ENCODE measurements at regions of chr1 and their contacts with region 1.

Region 1: GRCh38 chr1:204438628-204439027 is 27.0 kb upstream of the PPP1R15B start:
- DNase-seq: peak; percentile 62
- H3K4me3 ChIP-seq: no peak overlapping the region
- H3K27ac ChIP-seq: peak overlapping the region; percentile 37
- H3K4me1 ChIP-seq: peaks cover 42% of the 10 kb centered on the region
- H3K27me3 ChIP-seq: no peaks in the 10 kb centered on the region
- CTCF ChIP-seq: no peak
- POLR2A ChIP-seq: no peak

Region 2: DNA sequence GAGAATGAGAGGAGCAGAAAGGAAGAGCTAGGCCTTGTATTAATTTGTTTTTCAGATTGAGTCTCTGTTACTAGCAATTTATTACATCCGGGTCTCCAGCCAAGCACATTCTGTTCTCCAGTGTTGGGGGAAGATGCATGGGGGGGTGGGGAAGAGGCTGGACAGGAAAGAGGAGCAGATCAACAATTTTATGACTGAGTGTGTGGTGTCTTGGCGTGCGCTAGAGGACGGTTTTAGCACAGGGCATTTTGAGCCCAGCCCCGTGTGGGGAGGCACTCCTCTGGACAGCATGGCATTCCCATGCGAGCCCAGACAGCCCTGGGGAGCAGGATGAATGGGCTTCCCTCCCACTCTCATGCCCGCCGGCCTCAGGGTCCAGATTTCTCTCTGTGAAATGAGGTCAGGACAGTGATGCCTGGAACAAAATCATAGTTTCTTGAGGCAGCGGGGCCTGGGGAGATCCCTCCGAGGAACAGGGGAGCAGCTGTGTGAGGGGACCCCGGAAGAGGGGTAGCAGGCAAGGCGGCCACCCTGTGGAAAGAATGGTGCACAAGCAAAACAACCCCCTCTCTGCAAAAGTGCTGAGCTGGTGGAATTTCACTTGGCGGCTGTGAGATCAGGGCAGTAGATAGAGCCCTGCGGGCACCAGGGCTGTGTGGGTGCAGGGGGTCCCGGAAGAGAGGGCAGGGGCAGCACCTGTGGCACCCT is 349.4 kb before region 1 on chr1:
- CTCF ChIA-PET with region 1: no interaction called
- POLR2A ChIA-PET with region 1: no interaction called
- dilution Hi-C with region 1: no loop called
- intact Hi-C with region 1: no loop called
- DNase-seq: peak; percentile 50
- H3K4me3 ChIP-seq: no peak overlapping the region
- H3K27ac ChIP-seq: peak overlapping the region; percentile 6
- H3K4me1 ChIP-seq: peaks cover 25% of the 10 kb centered on the region
- H3K27me3 ChIP-seq: no peaks in the 10 kb centered on the region
- CTCF ChIP-seq: no peak
- POLR2A ChIP-seq: no peak

Region 3: DNA sequence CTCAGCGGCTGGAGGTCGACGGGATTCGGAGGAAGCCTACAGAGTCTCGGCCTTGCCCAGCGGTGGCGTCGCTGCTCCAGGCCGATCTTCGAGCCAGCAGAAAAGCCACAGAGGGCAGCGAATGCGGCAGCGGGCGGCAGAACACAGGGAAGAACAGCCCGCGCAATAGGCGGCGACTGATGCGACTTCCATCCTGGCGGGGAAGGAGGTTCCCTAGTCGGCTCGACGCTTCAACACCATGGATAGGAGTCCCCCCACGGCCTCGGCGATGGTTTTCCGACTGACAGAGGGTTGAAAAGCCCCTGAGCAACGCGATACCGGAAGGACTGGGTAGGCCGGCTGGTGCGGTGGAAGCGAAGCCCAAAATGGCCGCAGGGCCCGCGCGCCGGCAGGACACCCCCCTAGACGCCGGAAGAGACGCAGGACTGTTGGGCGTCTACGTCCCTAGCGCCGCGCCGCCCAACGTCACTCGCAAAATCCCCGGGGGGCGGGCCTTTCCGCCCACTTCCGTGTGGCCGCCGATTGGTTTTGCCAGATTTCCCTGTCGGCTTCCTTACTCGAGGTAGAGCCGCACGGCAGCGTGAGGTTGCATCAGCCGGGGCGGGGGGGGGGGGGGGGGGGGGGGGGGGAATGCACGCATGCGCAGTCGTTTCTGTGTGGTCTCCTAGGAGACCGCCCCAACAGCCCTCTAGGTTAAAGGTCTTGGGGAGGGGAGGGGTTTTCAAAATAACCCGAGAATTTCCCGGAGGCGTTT is 27.0 kb before region 1 on chr1 and contains the start of gene PPP1R15B:
- CTCF ChIA-PET with region 1: interaction called, 10 read pairs
- POLR2A ChIA-PET with region 1: no interaction called
- dilution Hi-C with region 1: no loop called
- intact Hi-C with region 1: loop called (anchors 1 kb)
- DNase-seq: peak; percentile 99
- H3K4me3 ChIP-seq: peak within 1 kb of the TSS; percentile 49 to 94 (median 78)
- H3K27ac ChIP-seq: peak within 1 kb of the TSS; percentile 89
- H3K4me1 ChIP-seq: peaks cover 6% of the 10 kb centered on the region
- H3K27me3 ChIP-seq: no peaks in the 10 kb centered on the region
- CTCF ChIP-seq: no peak
- POLR2A ChIP-seq: peak; percentile 96
- total RNA-seq, gene PPP1R15B: 39.8 and 41.7 TPM in 2 replicates

Region 4: DNA sequence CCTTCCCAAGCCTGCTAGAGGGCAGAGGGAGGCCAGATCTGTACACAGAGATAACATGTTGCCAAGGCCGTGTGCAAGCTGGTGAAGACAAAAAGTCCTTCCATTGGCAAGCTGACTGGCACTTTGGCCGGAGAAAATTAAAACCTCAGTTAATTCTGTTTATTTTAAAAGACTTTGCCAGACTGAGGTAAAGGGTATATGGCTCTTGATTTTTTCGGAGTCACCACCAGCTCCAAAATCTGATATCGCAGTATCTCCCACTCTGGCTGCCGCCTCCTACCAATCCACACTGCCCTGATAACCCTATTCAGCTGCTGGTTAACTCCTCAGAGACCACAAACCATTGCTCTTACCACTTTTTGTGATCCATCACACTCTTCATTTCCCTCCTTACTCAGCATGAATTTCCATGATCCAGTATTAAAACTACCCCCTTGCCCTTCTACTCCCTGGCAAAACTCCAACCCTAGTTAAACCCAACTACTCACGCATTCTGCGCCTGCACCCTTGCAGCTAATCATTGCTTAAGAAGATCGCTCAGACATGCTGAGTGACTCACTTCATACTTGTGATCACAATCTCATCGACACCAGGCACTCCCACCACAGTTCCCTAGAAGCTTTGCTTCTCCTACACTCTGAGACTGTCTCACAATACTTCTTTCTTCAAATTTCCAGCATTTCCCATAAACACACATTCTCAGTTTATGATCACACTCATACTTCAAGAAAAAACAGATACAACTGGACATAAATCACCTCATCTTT is 21.2 kb before region 1 on chr1:
- CTCF ChIA-PET with region 1: interaction called, 8 read pairs
- POLR2A ChIA-PET with region 1: interaction called, 9 read pairs
- dilution Hi-C with region 1: no loop called
- intact Hi-C with region 1: loop called (anchors 2 kb)
- DNase-seq: peak; percentile 95
- H3K4me3 ChIP-seq: peak overlapping the region in 1 of 3 experiments; percentile 31
- H3K27ac ChIP-seq: peak overlapping the region; percentile 84
- H3K4me1 ChIP-seq: peaks cover 26% of the 10 kb centered on the region
- H3K27me3 ChIP-seq: no peaks in the 10 kb centered on the region
- CTCF ChIP-seq: no peak
- POLR2A ChIP-seq: no peak

Region 5: GRCh38 chr1:204692325-204692840 is 253.8 kb after region 1 on chr1:
- CTCF ChIA-PET with region 1: no interaction called
- POLR2A ChIA-PET with region 1: no interaction called
- dilution Hi-C with region 1: no loop called
- intact Hi-C with region 1: no loop called
- DNase-seq: no peak
- H3K4me3 ChIP-seq: no peak overlapping the region
- H3K27ac ChIP-seq: no peak overlapping the region
- H3K4me1 ChIP-seq: no peaks in the 10 kb centered on the region
- H3K27me3 ChIP-seq: peaks cover 2 to 6% of the 10 kb centered on the region in 2 experiments
- CTCF ChIP-seq: no peak
- POLR2A ChIP-seq: no peak